MCF 10A (cell line): ENCODE measurements at regions of chr17 and their contacts with region 1.

Region 1: DNA sequence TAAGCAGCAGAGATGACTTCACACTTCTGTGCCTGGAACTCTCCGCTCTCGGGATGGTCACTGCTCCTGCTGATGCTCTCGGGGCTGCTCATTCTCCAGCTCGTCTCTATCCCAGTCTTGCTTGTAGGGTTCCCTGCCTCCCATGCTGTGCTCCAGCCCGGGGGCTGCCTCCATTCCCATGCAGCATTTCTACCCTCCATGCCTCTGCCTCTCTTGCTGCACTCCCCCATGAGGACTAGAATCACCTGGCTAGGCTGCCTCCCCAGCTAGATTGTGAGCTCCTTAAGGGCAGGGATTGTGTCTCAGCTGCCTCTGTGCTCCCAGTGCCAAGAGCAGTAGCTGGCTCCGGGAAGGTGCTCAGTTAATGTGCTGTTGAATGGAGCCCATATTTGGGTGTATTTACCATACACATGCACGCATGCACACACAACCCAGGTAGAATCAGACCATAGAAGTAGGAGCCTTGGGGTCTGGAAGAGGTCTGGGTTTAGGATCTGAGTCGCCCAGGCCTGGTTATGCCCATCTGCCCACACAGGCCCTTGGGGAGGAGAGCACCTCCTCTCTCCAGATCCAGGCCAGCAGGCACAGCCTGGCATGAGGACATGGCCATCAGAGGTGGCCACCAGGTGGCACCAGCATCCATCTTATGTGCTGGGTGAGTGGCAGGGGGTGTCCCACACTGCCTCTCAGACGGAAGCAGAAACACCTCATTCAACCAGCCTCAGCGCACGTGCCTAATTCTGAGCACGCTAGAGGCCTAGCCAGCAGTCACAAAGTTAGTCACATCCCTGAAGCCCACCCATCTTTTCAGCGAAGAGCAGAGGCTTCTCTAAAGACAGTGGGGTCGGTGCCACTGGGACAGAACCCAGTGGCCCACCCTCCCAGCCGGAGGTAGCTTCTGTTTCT is 9.3 kb downstream of the GIT1 start:
- DNase-seq: peak; percentile 87
- H3K4me3 Mint-ChIP-seq: peak overlapping the region; percentile 50
- H3K27ac Mint-ChIP-seq: peak overlapping the region; percentile 61
- H3K4me1 Mint-ChIP-seq: peaks cover 36% of the 10 kb centered on the region
- H3K27me3 Mint-ChIP-seq: no peaks in the 10 kb centered on the region
- CTCF ChIP-seq: peak; percentile 79

Region 2: DNA sequence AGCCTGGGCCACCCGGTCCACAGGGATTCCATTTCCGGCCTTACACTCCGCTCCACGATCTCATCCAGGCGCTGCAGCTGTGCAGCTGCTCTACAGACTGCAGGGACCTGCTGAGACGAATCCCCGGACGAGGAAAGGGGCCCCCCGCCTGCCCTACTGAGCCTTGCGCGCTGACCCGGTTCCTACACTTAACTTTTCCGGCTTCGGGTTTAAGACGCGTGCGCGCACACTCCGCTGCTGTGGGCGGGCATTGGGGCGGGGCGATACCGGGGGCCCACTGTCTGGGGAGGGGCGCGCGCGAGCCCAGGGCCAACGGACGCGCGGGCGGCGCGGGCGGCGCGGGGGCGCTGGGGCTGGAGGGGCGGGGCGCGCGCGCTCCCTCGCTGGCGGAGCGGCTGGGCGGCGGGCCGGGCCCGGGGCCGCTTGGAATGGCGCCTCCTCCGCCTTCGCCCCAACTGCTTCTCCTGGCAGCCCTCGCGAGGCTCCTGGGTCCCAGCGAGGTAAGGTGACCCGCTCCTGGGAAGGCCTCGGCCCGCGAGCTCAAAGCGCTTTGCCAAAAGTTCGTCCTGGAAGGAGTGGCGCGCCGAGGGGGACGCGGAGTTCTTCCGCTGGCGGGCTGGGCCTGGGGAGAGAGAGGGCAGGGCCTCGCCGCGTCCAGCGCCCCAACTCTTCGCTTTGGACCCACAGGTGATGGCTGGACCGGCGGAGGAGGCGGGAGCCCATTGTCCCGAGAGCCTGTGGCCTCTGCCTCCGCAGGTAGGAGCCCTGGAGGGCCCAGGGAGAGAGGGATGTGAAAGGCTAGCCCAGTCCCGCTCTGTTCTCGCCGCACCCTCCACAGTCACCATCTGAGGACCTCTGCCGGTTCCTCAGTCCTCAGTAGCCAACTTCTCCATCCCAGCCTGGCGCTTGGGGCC is 11.5 kb before region 1 on chr17 and contains the start of gene TP53I13:
- CTCF ChIA-PET with region 1: interaction called, 48 read pairs
- POLR2A ChIA-PET with region 1: interaction called, 30 read pairs
- intact Hi-C with region 1: no loop called
- DNase-seq: peak; percentile 78
- H3K4me3 Mint-ChIP-seq: peak within 1 kb of the TSS; percentile 80
- H3K27ac Mint-ChIP-seq: peak within 1 kb of the TSS; percentile 78
- H3K4me1 Mint-ChIP-seq: peaks cover 14% of the 10 kb centered on the region
- H3K27me3 Mint-ChIP-seq: no peaks in the 10 kb centered on the region
- CTCF ChIP-seq: no peak
- total RNA-seq, gene TP53I13: 29.6 and 34.5 TPM in 2 replicates

Region 3: GRCh38 chr17:29617125-29617480 is 37.0 kb after region 1 on chr17:
- CTCF ChIA-PET with region 1: interaction called, 10 read pairs
- POLR2A ChIA-PET with region 1: interaction called, 3 read pairs
- intact Hi-C with region 1: no loop called
- DNase-seq: no peak
- H3K4me3 Mint-ChIP-seq: no peak overlapping the region
- H3K27ac Mint-ChIP-seq: no peak overlapping the region
- H3K4me1 Mint-ChIP-seq: peaks cover 24% of the 10 kb centered on the region
- H3K27me3 Mint-ChIP-seq: no peaks in the 10 kb centered on the region
- CTCF ChIP-seq: peak; percentile 24

Region 4: DNA sequence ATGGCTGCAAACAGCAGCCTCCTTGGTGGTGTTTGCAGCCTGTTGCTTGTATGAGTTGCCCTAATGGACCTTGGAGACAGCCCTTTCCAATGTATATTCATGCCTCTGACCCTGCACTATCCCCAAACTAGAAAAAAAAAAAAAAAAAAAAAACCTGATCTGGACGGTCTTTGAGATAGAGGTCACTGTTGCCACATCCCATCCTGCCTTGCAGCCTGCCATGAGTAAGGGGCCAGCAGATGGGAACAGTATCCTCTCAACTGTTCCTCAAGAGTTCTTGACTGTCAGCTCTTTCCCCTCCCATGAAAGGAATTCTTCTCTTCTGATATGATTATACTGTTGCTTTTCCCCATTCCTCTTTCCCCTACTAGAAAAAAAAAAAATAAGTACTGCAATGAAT is 197.5 kb after region 1 on chr17:
- CTCF ChIA-PET with region 1: interaction called, 12 read pairs
- POLR2A ChIA-PET with region 1: no interaction called
- intact Hi-C with region 1: loop called (anchors 1 kb)
- DNase-seq: no peak
- H3K4me3 Mint-ChIP-seq: no peak overlapping the region
- H3K27ac Mint-ChIP-seq: no peak overlapping the region
- H3K4me1 Mint-ChIP-seq: no peaks in the 10 kb centered on the region
- H3K27me3 Mint-ChIP-seq: no peaks in the 10 kb centered on the region
- CTCF ChIP-seq: no peak